Caco-2 (cell line): ENCODE measurements at regions of chr7 and their contacts with region 1.

Region 1: DNA sequence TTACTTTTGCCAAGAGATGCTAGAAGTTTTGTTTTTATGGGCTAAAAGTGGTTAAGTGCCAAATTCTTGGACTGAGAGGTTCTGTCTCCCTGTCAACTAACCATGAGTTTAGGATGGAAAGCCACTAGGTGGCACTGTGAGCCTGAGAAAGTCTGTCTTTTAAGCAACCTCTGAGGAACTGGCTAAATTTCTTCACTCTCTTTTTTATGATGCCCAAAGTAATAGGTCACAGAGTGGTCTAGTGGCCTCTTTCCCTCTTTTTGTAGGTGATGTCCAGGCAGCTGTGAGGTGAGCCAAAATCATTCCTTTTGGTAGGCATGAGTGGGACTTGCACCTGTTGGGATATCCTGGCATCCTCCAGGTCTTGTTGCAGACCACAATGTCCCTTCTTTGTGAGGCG is 56.8 kb downstream of the SND1 start:
- DNase-seq: peak; percentile 68 to 79
- H3K4me3 ChIP-seq: no peak overlapping the region
- H3K4me3 Mint-ChIP-seq: no peak overlapping the region
- H3K27ac Mint-ChIP-seq: no peak overlapping the region
- H3K4me1 ChIP-seq: no peaks in the 10 kb centered on the region
- H3K4me1 Mint-ChIP-seq: peaks cover 6% of the 10 kb centered on the region
- H3K27me3 ChIP-seq: no peaks in the 10 kb centered on the region
- H3K27me3 Mint-ChIP-seq: no peaks in the 10 kb centered on the region
- CTCF ChIP-seq: peak; percentile 68 to 78

Region 2: DNA sequence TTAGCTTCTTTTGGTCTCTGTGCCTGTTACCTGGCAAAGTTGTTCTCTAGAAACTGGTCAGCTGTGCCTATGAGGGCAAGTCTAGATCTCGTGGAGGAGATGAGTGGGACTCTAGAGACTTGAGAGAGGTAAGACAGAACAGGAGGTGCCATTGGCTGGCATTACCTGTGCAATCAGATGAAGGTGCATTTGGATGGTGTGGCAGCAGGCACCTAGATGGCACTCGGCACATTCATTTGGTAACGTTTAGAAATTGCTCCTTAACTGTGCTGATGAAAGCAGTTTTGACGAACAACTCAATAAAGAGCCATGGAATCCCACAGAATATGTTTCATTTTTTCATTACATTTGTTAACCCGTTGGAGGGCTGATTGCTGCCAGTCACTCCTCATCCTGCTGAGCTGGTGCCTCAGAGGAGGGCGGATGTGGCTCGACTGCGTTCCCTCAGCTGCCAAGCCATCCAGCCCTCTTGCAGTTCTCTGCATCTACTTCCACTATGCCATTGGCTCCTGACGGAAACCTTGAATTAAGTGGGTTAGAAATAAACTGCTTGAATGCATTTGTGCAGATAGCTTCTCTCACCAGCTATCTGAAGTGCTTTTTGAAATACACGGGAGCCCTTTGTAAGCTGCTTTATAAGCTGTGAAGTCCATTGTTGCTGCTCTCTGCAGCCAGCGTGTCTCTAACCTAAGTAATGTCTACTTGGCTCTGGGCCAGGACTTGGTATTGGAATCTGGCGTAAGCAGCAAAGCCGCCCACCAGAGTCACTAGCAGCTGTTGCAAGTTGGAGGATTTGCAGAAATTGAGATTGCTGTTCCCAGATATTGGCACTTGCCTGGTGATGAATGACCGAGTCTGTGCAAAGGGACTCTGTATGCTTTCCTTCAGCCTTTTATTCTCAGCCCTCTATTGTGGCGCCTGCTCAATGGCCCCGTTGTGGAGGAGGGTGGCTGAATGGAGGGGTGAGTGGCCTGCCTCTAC is 235.0 kb after region 1 on chr7:
- CTCF ChIA-PET with region 1: no interaction called
- POLR2A ChIA-PET with region 1: no interaction called
- intact Hi-C with region 1: loop called (anchors 10 kb)
- DNase-seq: no peak
- H3K4me3 ChIP-seq: no peak overlapping the region
- H3K4me3 Mint-ChIP-seq: no peak overlapping the region
- H3K27ac Mint-ChIP-seq: no peak overlapping the region
- H3K4me1 ChIP-seq: peaks cover 4% of the 10 kb centered on the region; the same call in 1 of the 2 replicates
- H3K4me1 Mint-ChIP-seq: no peaks in the 10 kb centered on the region
- H3K27me3 ChIP-seq: no peaks in the 10 kb centered on the region
- H3K27me3 Mint-ChIP-seq: no peaks in the 10 kb centered on the region
- CTCF ChIP-seq: no peak

Region 3: GRCh38 chr7:128010394-128011127 is 301.8 kb after region 1 on chr7:
- CTCF ChIA-PET with region 1: no interaction called
- POLR2A ChIA-PET with region 1: no interaction called
- intact Hi-C with region 1: loop called (anchors 1 kb)
- DNase-seq: peak in 1 of 2 experiments; percentile 24
- H3K4me3 ChIP-seq: no peak overlapping the region
- H3K4me3 Mint-ChIP-seq: no peak overlapping the region
- H3K27ac Mint-ChIP-seq: no peak overlapping the region
- H3K4me1 ChIP-seq: peaks cover 8% of the 10 kb centered on the region; the same call in 1 of the 2 replicates
- H3K4me1 Mint-ChIP-seq: peaks cover 5% of the 10 kb centered on the region
- H3K27me3 ChIP-seq: no peaks in the 10 kb centered on the region
- H3K27me3 Mint-ChIP-seq: no peaks in the 10 kb centered on the region
- CTCF ChIP-seq: peak; percentile 24 to 32

Region 4: GRCh38 chr7:128135515-128136214 is 426.9 kb after region 1 on chr7:
- CTCF ChIA-PET with region 1: no interaction called
- POLR2A ChIA-PET with region 1: no interaction called
- intact Hi-C with region 1: loop called (anchors 2 kb)
- DNase-seq: peak in 1 of 2 experiments; percentile 76
- H3K4me3 ChIP-seq: peak overlapping the region; percentile 52
- H3K4me3 Mint-ChIP-seq: peak overlapping the region; percentile 65
- H3K27ac Mint-ChIP-seq: peak overlapping the region; percentile 42
- H3K4me1 ChIP-seq: peaks cover 8% of the 10 kb centered on the region; the same call in 1 of the 2 replicates
- H3K4me1 Mint-ChIP-seq: peaks cover 5% of the 10 kb centered on the region
- H3K27me3 ChIP-seq: peaks cover 3% of the 10 kb centered on the region; the same call in 1 of the 2 replicates
- H3K27me3 Mint-ChIP-seq: peaks cover 33% of the 10 kb centered on the region
- CTCF ChIP-seq: peak; percentile 75 to 92